AG04450 (cell line): ENCODE measurements at regions of chr12 and their contacts with region 1.

Region 1: GRCh38 chr12:107131832-107132616 is 38.7 kb upstream of the CRY1 start:
- DNase-seq: peak; percentile 51
- H3K4me3 ChIP-seq: no peak overlapping the region
- H3K27ac ChIP-seq: no peak overlapping the region
- H3K27me3 ChIP-seq: no peaks in the 10 kb centered on the region
- CTCF ChIP-seq: peak; percentile 89

Region 2: DNA sequence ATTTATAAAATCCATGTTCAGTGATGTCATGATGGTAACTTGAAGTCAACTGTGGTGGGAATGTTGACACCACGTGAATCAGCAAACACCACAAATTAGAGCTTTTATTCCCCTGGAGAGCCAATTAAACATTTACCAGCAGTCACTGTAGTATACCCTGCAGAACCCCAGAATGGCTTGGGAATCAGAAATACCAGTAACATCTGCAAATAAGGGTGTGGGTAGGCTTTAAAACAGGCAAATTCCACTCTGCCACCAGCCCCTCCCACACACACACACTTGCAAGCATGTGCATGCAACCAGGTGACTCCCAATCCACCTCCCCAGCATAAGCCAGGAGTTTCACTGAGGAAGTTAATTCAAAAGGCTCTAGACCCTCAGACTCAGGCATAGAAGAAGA is 239.9 kb before region 1 on chr12:
- CTCF ChIA-PET with region 1: no interaction called
- POLR2A ChIA-PET with region 1: no interaction called
- DNase-seq: no peak
- H3K4me3 ChIP-seq: no peak overlapping the region
- H3K27ac ChIP-seq: no peak overlapping the region
- H3K27me3 ChIP-seq: no peaks in the 10 kb centered on the region
- CTCF ChIP-seq: no peak

Region 3: DNA sequence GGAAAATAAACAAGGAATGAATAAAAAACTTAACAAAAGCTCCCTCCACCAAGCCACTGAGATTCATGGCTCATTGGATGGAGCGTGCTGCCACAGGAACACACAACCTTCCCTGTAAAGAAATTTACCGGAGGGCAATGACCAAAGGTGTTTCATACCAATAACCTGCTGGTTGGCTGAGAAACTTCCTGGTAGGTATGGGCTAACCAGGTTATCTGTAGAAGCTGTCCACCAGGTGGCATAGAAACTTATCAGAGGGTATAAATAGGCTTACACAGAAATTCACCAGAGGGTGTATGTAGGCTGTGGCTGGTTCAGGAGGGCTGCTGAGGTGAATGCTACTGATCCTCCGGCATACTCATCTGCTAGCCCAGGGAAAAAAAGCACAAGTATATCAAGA is 118.0 kb before region 1 on chr12:
- CTCF ChIA-PET with region 1: no interaction called
- POLR2A ChIA-PET with region 1: no interaction called
- DNase-seq: no peak
- H3K4me3 ChIP-seq: no peak overlapping the region
- H3K27ac ChIP-seq: no peak overlapping the region
- H3K27me3 ChIP-seq: no peaks in the 10 kb centered on the region
- CTCF ChIP-seq: no peak

Region 4: GRCh38 chr12:107109741-107110719 is 22.0 kb before region 1 on chr12:
- CTCF ChIA-PET with region 1: interaction called, 25 read pairs
- POLR2A ChIA-PET with region 1: no interaction called
- DNase-seq: no peak
- H3K4me3 ChIP-seq: no peak overlapping the region
- H3K27ac ChIP-seq: no peak overlapping the region
- H3K27me3 ChIP-seq: peaks cover 13% of the 10 kb centered on the region
- CTCF ChIP-seq: no peak

Region 5: DNA sequence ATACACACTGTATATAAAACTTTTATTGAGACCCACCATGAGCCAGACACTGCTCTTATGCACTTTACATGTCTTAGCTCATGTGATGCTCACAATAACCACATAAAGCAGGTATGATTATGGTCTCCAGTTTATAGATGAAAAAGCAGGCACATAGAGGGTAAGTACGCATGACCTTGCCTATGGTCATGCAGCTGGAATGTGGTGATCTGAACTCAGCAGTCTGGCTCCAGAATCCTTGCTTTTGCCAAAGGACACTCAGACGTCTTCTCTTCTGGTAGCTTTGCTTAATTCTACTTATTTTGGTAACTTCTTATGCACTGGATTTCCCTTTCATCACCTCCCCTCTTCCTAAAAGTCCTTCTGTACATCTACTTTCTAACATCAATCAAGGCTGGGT is 64.7 kb after region 1 on chr12:
- CTCF ChIA-PET with region 1: interaction called, 10 read pairs
- POLR2A ChIA-PET with region 1: no interaction called
- DNase-seq: peak; percentile 33
- H3K4me3 ChIP-seq: no peak overlapping the region
- H3K27ac ChIP-seq: no peak overlapping the region
- H3K27me3 ChIP-seq: no peaks in the 10 kb centered on the region
- CTCF ChIP-seq: no peak

Region 6: GRCh38 chr12:107356266-107356936 is 224.4 kb after region 1 on chr12:
- CTCF ChIA-PET with region 1: interaction called, 16 read pairs
- POLR2A ChIA-PET with region 1: no interaction called
- DNase-seq: peak; percentile 76
- H3K4me3 ChIP-seq: no peak overlapping the region
- H3K27ac ChIP-seq: no peak overlapping the region
- H3K27me3 ChIP-seq: no peaks in the 10 kb centered on the region
- CTCF ChIP-seq: no peak

Region 7: GRCh38 chr12:107441665-107442300 is 309.8 kb after region 1 on chr12:
- CTCF ChIA-PET with region 1: interaction called, 16 read pairs
- POLR2A ChIA-PET with region 1: no interaction called
- DNase-seq: no peak
- H3K4me3 ChIP-seq: peak overlapping the region; percentile 42
- H3K27ac ChIP-seq: no peak overlapping the region
- H3K27me3 ChIP-seq: no peaks in the 10 kb centered on the region
- CTCF ChIP-seq: no peak

Region 8: GRCh38 chr12:107522692-107523477 is 390.9 kb after region 1 on chr12:
- CTCF ChIA-PET with region 1: no interaction called
- POLR2A ChIA-PET with region 1: no interaction called
- DNase-seq: no peak
- H3K4me3 ChIP-seq: no peak overlapping the region
- H3K27ac ChIP-seq: no peak overlapping the region
- H3K27me3 ChIP-seq: no peaks in the 10 kb centered on the region
- CTCF ChIP-seq: peak; percentile 28

Region 9: DNA sequence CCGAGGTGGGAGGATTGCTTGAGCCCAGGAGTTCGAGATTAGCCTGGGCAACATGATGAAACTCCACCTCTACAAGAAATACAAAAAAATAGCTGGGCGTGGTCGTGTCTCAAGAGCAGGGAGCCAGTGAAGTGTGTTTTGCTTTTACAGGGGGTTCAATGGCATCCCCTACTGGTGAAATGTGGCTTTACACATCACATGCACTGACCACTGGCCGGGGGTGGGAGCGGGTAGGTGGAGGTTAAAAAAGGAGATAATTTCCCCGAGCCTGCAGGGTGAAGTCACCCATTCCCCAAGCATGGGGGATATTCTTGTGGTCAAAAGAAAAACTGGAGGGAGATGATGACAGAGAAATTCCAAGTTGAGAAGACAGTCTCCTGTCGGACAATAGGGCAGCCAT is 490.0 kb after region 1 on chr12:
- CTCF ChIA-PET with region 1: interaction called, 14 read pairs
- POLR2A ChIA-PET with region 1: no interaction called
- DNase-seq: no peak
- H3K4me3 ChIP-seq: no peak overlapping the region
- H3K27ac ChIP-seq: no peak overlapping the region
- H3K27me3 ChIP-seq: no peaks in the 10 kb centered on the region
- CTCF ChIP-seq: peak; percentile 51